Activated CD4-positive, alpha-beta T cell treated with anti-CD3 and anti-CD28 coated beads, Interleukin-2, amount 10 ng/mL, durations not matched to agents 7 days and 5 days (primary cell): ENCODE measurements at regions of chr12 and their contacts with region 1.

Region 1: GRCh38 chr12:11581179-11581755 is 68.2 kb upstream of the ETV6 start:
- DNase-seq: peak; percentile 81
- H3K4me3 Mint-ChIP-seq: no peak overlapping the region
- H3K27ac Mint-ChIP-seq: no peak overlapping the region
- H3K4me1 Mint-ChIP-seq: peaks cover 11% of the 10 kb centered on the region
- H3K27me3 Mint-ChIP-seq: peaks cover 2% of the 10 kb centered on the region

Region 2: GRCh38 chr12:12032851-12033588 is 451.8 kb after region 1 on chr12:
- CTCF ChIA-PET with region 1: interaction called, 26 read pairs
- POLR2A ChIA-PET with region 1: no interaction called
- DNase-seq: peak; percentile 72
- H3K4me3 Mint-ChIP-seq: peak overlapping the region; percentile 63
- H3K27ac Mint-ChIP-seq: peak overlapping the region; percentile 78
- H3K4me1 Mint-ChIP-seq: peaks cover 21% of the 10 kb centered on the region
- H3K27me3 Mint-ChIP-seq: no peaks in the 10 kb centered on the region